ENCODE measurements at regions of chr10 and their contacts with region 1.

Region 1: GRCh38 chr10:58291538-58292174 is 22.7 kb downstream of the CISD1 start:
- DNase-seq: peak; percentile 55
- H3K4me3 Mint-ChIP-seq: no peak overlapping the region
- H3K27ac Mint-ChIP-seq: no peak overlapping the region
- H3K4me1 Mint-ChIP-seq: peaks cover 4% of the 10 kb centered on the region
- H3K27me3 Mint-ChIP-seq: no peaks in the 10 kb centered on the region

Region 2: DNA sequence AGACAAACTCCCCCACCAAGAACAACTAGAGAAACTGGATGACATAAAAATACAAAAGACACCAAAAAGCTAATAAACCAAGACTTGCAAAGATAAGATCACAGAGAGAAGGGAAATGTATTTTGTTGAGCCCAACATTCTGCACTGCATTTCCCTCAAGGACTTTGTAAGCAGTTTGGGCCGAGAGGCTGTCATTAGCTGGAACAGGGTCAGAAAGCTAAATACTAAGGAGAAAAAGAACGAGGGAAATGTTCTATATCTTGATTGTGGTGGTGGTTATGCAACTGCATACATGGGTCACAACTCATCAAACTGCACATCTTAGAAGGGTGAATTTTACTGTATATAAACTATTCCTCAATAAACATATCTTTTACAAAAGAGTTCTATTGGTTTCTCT is 338.9 kb before region 1 on chr10:
- CTCF ChIA-PET with region 1: no interaction called
- intact Hi-C with region 1: no loop called
- DNase-seq: no peak
- H3K4me3 Mint-ChIP-seq: no peak overlapping the region
- H3K27ac Mint-ChIP-seq: no peak overlapping the region
- H3K4me1 Mint-ChIP-seq: no peaks in the 10 kb centered on the region
- H3K27me3 Mint-ChIP-seq: no peaks in the 10 kb centered on the region

Region 3: GRCh38 chr10:58275908-58276307 is 15.7 kb before region 1 on chr10:
- CTCF ChIA-PET with region 1: interaction called, 11 read pairs
- intact Hi-C with region 1: no loop called
- DNase-seq: no peak
- H3K4me3 Mint-ChIP-seq: no peak overlapping the region
- H3K27ac Mint-ChIP-seq: no peak overlapping the region
- H3K4me1 Mint-ChIP-seq: peaks cover 44% of the 10 kb centered on the region
- H3K27me3 Mint-ChIP-seq: no peaks in the 10 kb centered on the region

Measured in activated naive CD4-positive, alpha-beta T cell treated with anti-CD3 and anti-CD28 coated beads for 36 hours (primary cell).